Activated naive CD4-positive, alpha-beta T cell treated with anti-CD3 and anti-CD28 coated beads for 36 hours (primary cell): ENCODE measurements at regions of chr20 and their contacts with region 1.

Region 1: GRCh38 chr20:2005831-2006426 is 12.1 kb upstream of the PDYN start:
- DNase-seq: peak; percentile 84
- H3K4me3 Mint-ChIP-seq: no peak overlapping the region
- H3K27ac Mint-ChIP-seq: no peak overlapping the region
- H3K4me1 Mint-ChIP-seq: no peaks in the 10 kb centered on the region
- H3K27me3 Mint-ChIP-seq: peaks cover 25% of the 10 kb centered on the region

Region 2: DNA sequence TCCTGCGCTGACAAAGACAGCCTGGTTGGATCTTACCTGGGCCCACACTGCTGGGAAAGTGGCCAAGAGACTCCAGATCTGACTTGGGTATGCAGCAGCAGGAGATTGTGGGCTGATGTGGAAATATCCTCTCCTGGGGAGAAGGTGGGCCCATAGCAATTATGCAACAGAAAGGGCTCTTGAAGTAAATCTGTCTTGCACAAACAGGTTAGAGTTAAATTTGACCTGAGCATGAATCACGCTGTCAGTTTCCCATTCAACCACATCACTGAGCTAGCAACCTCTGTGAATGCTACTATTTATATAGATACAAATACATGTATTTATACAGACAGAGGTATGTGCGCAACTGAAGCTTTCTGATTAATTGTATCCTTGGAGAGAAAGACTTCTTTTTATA is 16.2 kb after region 1 on chr20:
- CTCF ChIA-PET with region 1: interaction called, 10 read pairs
- intact Hi-C with region 1: no loop called
- DNase-seq: no peak
- H3K4me3 Mint-ChIP-seq: no peak overlapping the region
- H3K27ac Mint-ChIP-seq: no peak overlapping the region
- H3K4me1 Mint-ChIP-seq: no peaks in the 10 kb centered on the region
- H3K27me3 Mint-ChIP-seq: peaks cover 24% of the 10 kb centered on the region

Region 3: DNA sequence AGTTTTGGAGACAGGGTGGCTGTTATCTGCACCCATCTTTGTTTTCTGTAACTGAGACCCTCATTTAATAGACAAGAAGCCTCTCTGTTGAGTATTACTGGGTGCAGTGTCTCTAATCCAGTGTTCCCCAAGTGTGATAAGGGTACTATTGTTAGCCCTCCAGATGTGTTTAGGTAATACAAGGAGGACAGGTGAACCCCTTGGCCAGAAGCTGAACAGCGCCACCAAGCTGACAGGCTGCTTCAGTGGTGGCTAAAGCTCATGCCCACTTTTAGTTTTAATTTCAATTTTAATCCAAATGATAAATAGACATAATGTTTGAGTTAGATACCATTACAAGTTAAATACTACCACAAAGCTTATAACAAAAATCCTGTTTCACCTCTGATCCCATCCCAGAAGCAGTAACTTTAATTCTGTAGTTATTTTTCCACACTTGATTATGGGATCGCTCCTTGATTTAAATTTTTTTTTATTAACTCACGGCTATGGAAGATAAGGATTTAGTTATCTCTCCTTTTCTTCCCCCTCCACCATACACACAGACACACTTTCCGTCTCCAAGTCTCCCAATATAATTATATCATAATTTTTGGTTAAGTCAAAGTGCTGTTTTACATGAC is 87.3 kb after region 1 on chr20:
- CTCF ChIA-PET with region 1: interaction called, 4 read pairs
- intact Hi-C with region 1: loop called (anchors 10 kb)
- DNase-seq: peak; percentile 65
- H3K4me3 Mint-ChIP-seq: no peak overlapping the region
- H3K27ac Mint-ChIP-seq: no peak overlapping the region
- H3K4me1 Mint-ChIP-seq: no peaks in the 10 kb centered on the region
- H3K27me3 Mint-ChIP-seq: peaks cover 28% of the 10 kb centered on the region

Region 4: DNA sequence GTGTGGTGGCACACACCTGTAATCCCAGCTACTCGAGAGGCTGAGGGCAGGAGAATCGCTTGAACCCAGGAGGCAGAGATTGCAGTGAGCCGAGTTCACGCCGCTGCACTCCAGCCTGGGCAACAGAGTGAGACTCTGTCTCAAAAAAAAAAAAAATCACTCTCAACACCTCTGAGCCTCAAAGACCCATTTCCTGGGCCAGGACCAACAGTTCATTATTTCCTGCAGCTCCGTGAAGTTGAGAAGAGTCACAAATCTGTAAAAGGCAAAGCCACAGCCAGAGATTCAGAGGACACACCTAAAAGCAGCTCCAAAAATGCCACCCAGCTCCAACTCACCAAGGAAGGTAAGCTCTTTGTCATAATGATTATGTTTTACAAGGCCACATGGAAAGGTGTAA is 631.3 kb after region 1 on chr20:
- CTCF ChIA-PET with region 1: no interaction called
- intact Hi-C with region 1: no loop called
- DNase-seq: no peak
- H3K4me3 Mint-ChIP-seq: no peak overlapping the region
- H3K27ac Mint-ChIP-seq: no peak overlapping the region
- H3K4me1 Mint-ChIP-seq: peaks cover 3% of the 10 kb centered on the region
- H3K27me3 Mint-ChIP-seq: no peaks in the 10 kb centered on the region